HEK293T (cell line): ENCODE measurements at regions of chr11 and their contacts with region 1.

Region 1: DNA sequence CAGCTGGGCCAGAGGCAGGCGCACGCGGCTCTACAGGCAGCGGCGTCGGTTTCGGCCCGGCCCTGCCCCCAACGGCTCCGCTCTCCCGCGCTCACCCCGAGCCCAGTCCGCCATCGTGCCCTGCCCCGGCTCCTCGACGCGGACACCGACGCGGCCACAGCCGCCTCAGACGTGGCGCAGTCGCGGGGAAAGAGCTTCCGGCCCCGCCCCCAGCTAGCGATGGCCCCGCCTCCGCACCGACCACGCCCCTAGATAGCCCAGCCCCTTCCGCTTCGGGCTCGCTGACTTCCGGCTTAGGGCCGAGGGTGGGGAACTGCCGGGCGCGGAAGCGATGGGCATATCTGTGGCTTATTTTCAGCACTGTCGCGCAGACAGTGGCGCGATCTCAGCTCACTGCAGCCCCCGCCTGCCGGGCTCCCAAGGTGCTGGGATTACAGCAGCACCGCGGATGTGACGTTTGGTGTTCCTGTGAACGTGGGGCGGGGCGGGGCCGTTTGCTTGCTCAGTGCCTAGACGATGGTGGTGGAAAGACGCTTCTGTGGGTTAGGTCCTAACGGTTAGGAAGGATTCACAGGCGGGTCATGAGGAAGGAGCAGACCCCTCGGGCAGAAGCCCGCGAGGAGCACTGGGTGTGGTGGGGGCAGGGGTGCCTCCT is at the starts of genes BET1L and RIC8A:
- DNase-seq: peak; percentile 97

Region 2: GRCh38 chr11:223026-223789 is 15.9 kb after region 1 on chr11:
- CTCF ChIA-PET with region 1: no interaction called
- POLR2A ChIA-PET with region 1: interaction called, 13 read pairs
- DNase-seq: no peak

Region 3: DNA sequence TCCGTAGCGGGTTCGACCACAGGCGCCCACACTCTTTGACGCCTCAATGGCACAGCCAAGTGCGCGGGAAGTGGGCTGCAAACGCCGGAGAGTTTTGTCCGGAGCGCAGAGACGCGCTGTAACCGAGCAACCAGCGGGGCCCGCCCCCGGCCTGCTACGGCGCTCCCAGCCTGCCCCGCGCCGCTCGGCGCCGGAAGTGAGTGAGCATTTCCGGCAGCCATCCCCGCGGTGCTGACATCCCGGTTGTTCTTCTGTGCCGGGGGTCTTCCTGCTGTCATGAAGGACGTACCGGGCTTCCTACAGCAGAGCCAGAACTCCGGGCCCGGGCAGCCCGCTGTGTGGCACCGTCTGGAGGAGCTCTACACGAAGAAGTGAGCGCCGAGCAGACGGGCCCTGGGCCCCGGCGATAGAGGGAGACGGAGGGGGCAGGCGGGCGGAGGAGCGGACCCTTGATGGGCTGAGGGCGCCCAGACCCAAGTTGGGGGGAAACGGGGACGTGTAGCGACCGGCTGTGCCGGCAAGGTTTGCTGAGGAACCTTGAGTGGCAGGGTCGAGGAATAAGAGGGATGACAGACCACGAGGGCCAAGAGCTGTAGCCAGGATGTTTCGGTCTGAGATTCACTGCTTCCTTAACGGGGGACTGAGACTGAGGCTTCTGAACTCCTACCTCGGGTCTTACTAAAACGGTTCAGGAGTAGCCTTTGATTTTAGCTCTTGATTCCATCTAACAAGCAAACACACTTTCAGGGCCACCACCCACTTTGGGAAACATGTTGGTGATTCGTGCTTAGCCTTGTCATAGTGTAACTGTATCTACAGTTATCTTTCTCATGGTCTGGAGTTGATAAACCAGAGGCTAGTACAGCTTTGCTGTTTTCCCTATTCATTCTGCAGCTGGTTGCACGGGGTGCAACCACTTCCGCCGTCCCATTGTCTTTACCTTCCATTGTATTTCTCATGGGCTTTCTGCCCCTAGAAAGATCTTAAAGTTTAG is 29.7 kb after region 1 on chr11 and contains the start of gene PSMD13:
- CTCF ChIA-PET with region 1: no interaction called
- POLR2A ChIA-PET with region 1: interaction called, 14 read pairs
- DNase-seq: peak; percentile 90

Region 4: GRCh38 chr11:250740-251299 is 43.5 kb after region 1 on chr11:
- CTCF ChIA-PET with region 1: interaction called, 3 read pairs
- POLR2A ChIA-PET with region 1: interaction called, 10 read pairs
- DNase-seq: peak; percentile 71

Region 5: GRCh38 chr11:269146-269890 is 62.0 kb after region 1 on chr11:
- CTCF ChIA-PET with region 1: no interaction called
- POLR2A ChIA-PET with region 1: no interaction called
- DNase-seq: no peak

Region 6: GRCh38 chr11:447923-448731 is 240.8 kb after region 1 on chr11:
- CTCF ChIA-PET with region 1: no interaction called
- POLR2A ChIA-PET with region 1: interaction called, 41 read pairs
- DNase-seq: peak; percentile 95